MCF 10A (cell line): ENCODE measurements at regions of chr12 and their contacts with region 1.

Region 1: DNA sequence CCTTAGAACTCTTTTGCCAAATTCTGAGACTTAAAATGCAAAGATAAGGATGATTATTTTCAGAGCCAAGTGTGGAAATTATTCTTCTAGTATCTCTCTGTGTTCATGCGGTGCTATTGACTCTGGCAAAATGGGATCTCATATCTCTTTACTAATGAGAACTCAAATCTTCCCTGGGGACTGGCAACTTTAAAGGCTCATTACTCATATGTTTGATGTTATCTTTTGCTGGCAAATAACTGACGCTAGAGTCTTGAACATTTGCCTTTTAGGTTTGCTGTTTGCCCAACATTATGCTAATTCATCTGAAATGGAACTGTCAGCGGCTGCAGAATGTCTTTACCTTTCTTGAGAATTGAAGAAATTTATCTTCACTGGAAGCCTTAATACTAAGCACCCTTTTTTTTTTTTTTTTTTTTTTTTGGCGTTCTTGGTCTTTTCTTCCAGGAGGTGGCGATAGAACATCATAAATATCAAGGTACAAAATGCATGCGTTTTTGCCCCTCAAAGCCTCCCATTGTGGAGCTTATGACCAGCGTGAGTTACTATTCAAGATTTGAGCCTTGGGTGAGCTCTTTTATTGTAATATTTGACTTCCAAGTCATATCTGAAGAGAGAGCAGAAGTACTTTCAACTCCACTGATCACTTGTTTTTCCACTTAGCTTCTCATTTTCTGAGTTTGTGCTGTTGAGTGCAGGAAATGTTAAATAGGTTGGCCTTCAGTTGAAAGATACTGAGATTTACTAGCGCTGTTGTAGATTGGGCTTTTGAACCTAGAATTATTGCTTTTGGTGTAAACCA is 86.6 kb downstream of the CAND1 start:
- DNase-seq: peak; percentile 59
- H3K4me3 Mint-ChIP-seq: no peak overlapping the region
- H3K27ac Mint-ChIP-seq: no peak overlapping the region
- H3K4me1 Mint-ChIP-seq: peaks cover 15% of the 10 kb centered on the region
- H3K27me3 Mint-ChIP-seq: no peaks in the 10 kb centered on the region
- CTCF ChIP-seq: peak; percentile 48

Region 2: DNA sequence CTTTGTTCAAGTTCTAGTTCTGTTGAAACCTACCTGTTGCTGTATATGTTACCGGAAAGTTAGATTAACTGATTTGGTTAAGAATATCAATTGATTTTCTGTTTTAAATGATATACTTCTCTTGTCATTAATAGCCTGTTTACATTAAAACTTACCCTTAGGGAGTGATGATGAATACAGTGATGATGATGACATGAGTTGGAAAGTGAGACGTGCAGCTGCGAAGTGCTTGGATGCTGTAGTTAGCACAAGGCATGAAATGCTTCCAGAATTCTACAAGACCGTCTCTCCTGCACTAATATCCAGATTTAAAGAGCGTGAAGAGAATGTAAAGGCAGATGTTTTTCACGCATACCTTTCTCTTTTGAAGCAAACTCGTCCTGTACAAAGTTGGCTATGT is 53.6 kb before region 1 on chr12:
- CTCF ChIA-PET with region 1: no interaction called
- POLR2A ChIA-PET with region 1: no interaction called
- intact Hi-C with region 1: no loop called
- DNase-seq: no peak
- H3K4me3 Mint-ChIP-seq: no peak overlapping the region
- H3K27ac Mint-ChIP-seq: no peak overlapping the region
- H3K4me1 Mint-ChIP-seq: peaks cover 4% of the 10 kb centered on the region
- H3K27me3 Mint-ChIP-seq: no peaks in the 10 kb centered on the region
- CTCF ChIP-seq: no peak

Region 3: GRCh38 chr12:67370979-67371378 is 15.2 kb after region 1 on chr12:
- CTCF ChIA-PET with region 1: interaction called, 29 read pairs
- POLR2A ChIA-PET with region 1: no interaction called
- intact Hi-C with region 1: no loop called
- DNase-seq: no peak
- H3K4me3 Mint-ChIP-seq: no peak overlapping the region
- H3K27ac Mint-ChIP-seq: no peak overlapping the region
- H3K4me1 Mint-ChIP-seq: no peaks in the 10 kb centered on the region
- H3K27me3 Mint-ChIP-seq: no peaks in the 10 kb centered on the region
- CTCF ChIP-seq: no peak

Region 4: GRCh38 chr12:67434671-67435370 is 79.0 kb after region 1 on chr12:
- CTCF ChIA-PET with region 1: interaction called, 62 read pairs
- POLR2A ChIA-PET with region 1: interaction called, 3 read pairs
- intact Hi-C with region 1: loop called (anchors 2 kb)
- DNase-seq: peak; percentile 64
- H3K4me3 Mint-ChIP-seq: no peak overlapping the region
- H3K27ac Mint-ChIP-seq: peak overlapping the region; percentile 20
- H3K4me1 Mint-ChIP-seq: peaks cover 16% of the 10 kb centered on the region
- H3K27me3 Mint-ChIP-seq: no peaks in the 10 kb centered on the region
- CTCF ChIP-seq: no peak

Region 5: DNA sequence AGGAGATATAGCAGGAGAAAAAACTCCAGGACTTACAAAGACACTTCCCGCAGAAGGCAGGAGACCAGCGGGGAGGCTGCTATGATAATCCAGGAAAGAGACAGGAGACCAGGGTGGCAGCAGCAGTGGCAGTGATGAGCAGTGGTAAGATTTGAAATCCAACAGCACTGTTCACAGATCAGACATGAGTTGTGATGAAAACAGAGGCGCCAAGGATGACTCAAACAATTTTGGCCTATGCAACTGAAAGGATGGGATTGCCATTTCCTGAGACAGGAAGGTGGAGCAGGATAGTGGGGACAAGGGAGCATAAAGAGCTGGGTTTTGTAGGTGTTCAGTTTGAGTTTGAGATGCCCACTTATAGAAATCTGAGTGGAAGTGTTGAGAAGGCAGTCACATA is 184.2 kb after region 1 on chr12:
- CTCF ChIA-PET with region 1: no interaction called
- POLR2A ChIA-PET with region 1: no interaction called
- intact Hi-C with region 1: no loop called
- DNase-seq: peak; percentile 46
- H3K4me3 Mint-ChIP-seq: no peak overlapping the region
- H3K27ac Mint-ChIP-seq: no peak overlapping the region
- H3K4me1 Mint-ChIP-seq: peaks cover 24% of the 10 kb centered on the region
- H3K27me3 Mint-ChIP-seq: no peaks in the 10 kb centered on the region
- CTCF ChIP-seq: no peak

Region 6: GRCh38 chr12:67648521-67649260 is 292.9 kb after region 1 on chr12 and contains the start of gene DYRK2:
- CTCF ChIA-PET with region 1: interaction called, 3 read pairs
- POLR2A ChIA-PET with region 1: interaction called, 4 read pairs
- intact Hi-C with region 1: loop called (anchors 2 kb)
- DNase-seq: peak; percentile 65
- H3K4me3 Mint-ChIP-seq: peak within 1 kb of the TSS; percentile 91
- H3K27ac Mint-ChIP-seq: peak within 1 kb of the TSS; percentile 63
- H3K4me1 Mint-ChIP-seq: peaks cover 40% of the 10 kb centered on the region
- H3K27me3 Mint-ChIP-seq: no peaks in the 10 kb centered on the region
- CTCF ChIP-seq: peak; percentile 7
- total RNA-seq, gene DYRK2: 24.6 and 33.3 TPM in 2 replicates

Region 7: DNA sequence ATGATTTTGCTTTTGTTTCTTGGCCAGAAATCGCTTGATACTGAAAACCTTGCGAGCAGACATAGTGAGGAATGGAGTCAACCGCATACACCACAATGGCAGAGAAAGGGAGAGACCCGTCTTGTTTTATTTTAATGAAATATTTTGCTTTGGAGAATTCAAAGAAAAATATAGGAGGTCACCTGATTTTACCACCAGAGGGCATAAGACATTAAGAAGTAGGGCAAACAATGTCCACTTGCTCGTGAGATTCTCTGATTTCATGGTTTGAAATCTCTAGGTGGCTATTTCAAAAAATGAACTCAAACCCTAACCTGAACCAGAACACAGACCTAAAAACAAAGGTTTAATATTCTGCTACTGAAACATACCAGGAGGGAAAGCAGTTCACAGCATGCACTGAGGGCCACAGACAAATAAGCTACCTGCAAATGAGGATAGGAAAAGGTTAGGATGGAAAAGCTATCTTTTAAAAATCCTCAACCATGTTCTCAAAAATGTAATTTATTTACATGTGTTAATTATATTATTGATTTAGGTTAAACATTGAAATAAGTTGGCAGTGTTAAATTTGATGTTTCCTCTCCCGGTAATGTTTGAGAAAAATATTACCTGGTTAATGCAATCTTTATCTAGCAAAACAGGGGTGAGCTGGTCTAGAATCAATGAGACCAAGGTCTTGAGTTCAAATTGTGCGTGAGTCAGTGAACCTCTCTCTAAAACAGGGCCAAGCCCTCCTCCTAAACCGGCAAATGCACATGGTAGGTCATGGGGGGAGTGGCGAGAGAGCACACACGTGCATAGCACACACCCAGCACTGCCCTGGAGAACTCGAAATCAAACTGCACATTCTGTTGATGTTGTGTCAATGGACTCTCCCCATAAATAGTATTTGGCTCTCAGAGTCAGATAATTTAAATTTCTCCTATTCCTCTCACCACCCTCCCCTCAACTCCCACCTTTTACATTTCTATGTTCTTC is 646.0 kb after region 1 on chr12:
- CTCF ChIA-PET with region 1: interaction called, 4 read pairs
- POLR2A ChIA-PET with region 1: interaction called, 3 read pairs
- intact Hi-C with region 1: loop called (anchors 1 kb)
- DNase-seq: peak; percentile 40
- H3K4me3 Mint-ChIP-seq: no peak overlapping the region
- H3K27ac Mint-ChIP-seq: no peak overlapping the region
- H3K4me1 Mint-ChIP-seq: peaks cover 3% of the 10 kb centered on the region
- H3K27me3 Mint-ChIP-seq: no peaks in the 10 kb centered on the region
- CTCF ChIP-seq: peak; percentile 39

Region 8: DNA sequence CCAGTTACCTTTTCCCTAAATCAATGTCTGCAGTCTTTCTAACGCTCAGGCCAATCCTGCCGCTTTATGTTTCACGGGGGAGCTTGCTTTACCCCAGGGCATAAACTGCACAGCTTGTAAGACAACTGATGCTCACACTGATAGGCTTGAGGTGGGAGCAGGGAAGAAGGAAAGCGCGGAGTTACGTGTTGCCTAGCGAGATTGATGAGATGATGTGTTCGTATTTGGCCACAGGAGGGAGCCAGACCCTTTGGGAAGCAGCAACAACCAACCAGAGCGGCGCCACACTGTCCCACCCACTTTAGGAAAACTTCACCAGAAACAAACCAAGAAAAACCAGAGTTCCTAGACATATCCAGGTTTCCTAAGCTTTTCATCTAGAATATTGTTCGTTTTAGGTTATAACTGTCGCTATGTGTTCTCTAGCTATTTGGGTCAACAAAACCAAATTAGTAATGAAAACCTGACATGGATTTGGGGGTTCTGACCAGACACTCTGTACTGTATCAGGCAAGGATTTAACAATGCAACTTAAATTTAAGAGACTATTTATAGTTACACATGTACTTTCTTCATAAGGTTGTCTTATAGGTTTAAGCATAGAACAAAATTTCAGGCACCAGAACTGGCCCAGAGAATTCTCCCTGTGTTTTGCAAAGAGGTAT is 867.4 kb after region 1 on chr12:
- CTCF ChIA-PET with region 1: no interaction called
- POLR2A ChIA-PET with region 1: no interaction called
- intact Hi-C with region 1: loop called (anchors 2 kb)
- DNase-seq: peak; percentile 88
- H3K4me3 Mint-ChIP-seq: no peak overlapping the region
- H3K27ac Mint-ChIP-seq: no peak overlapping the region
- H3K4me1 Mint-ChIP-seq: peaks cover 20% of the 10 kb centered on the region
- H3K27me3 Mint-ChIP-seq: peaks cover 12% of the 10 kb centered on the region
- CTCF ChIP-seq: peak; percentile 87